Right ventricle myocardium inferior (tissue), 1 donor: ENCODE measurements at regions of chr6 and their contacts with region 1.

Region 1: GRCh38 chr6:138287144-138287955 is 69.1 kb upstream of the PBOV1 start:
- DNase-seq: no peak
- ATAC-seq: no peak

Region 2: GRCh38 chr6:138001750-138002349 is 285.5 kb before region 1 on chr6:
- intact Hi-C with region 1: loop called (anchors 10 kb)
- DNase-seq: no peak
- ATAC-seq: peak; percentile 42

Region 3: DNA sequence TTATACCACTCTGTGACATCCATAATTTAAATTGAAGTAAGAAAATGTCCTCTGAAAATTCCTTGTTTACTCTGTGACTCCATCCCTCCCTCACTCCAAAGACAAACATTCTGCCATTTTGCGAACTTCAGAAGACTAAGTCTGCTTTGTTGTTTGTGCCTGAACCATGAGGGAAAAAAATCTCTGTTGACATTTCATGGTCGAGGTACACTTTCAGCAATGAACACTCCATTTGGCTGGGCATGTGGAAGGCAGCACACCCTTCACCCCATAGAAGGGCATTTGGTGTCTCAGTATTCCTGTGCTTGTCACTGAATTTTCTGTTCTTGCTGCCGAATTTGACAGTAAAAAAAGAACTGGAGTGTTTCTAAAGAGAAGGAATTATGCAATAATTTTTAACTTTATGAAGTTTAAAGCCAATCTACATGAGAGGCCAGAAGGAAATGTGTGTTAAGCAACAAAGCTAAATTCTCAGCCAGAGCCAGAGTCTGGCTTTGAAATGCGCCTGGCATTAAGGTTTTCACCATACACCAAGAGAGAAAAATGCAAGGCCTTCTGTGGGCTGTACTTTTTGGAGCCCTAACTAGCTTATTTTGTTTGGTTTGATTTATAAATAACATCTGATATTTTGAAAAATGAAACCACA is 64.3 kb before region 1 on chr6:
- intact Hi-C with region 1: no loop called
- DNase-seq: no peak
- ATAC-seq: no peak

Region 4: DNA sequence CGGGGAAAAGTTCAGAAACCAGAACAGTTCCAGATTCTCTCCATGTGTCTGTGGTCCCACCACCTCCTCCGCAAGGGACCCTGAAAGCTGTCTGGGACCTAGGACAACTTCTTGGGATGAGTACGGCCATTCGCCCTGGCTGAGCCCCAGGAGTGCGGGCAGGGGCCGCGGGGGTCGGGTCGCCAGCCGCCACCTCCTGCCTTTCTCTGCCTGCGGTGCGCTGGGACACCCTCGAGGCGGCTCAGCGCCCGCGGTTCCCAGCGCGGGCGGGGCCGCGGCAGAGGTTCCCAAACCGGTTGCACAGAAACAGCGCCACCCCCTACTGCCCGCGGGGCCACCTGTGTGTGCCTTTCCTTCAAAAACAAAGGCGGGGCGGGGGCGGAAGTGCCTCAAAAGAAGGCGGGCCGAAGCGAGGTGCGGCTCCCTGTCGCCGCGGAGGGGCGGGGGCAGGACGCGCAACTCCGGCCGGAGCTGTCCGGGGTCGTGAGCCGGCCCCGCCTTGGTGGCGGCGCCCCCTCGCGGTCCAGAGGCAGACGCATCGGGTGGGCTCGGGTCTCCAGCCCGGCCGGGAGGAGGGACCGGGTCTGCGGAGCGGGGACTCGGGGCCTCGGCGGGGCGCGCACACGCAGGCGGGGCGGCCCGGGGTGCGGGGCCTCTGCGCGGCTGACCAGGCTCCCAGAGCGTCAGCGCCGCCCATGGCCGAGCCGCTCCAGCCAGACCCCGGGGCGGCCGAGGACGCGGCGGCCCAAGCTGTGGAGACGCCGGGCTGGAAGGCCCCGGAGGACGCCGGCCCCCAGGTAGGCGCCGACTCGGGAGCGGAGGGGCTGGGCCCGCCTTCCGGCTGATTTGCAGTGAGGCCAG is 116.7 kb after region 1 on chr6 and contains the start of gene HEBP2:
- intact Hi-C with region 1: loop called (anchors 5 kb)
- DNase-seq: peak; percentile 98
- ATAC-seq: peak; percentile 96
- total RNA-seq, gene HEBP2: 103 TPM